ENCODE measurements at regions of chr2 and their contacts with region 1.

Region 1: DNA sequence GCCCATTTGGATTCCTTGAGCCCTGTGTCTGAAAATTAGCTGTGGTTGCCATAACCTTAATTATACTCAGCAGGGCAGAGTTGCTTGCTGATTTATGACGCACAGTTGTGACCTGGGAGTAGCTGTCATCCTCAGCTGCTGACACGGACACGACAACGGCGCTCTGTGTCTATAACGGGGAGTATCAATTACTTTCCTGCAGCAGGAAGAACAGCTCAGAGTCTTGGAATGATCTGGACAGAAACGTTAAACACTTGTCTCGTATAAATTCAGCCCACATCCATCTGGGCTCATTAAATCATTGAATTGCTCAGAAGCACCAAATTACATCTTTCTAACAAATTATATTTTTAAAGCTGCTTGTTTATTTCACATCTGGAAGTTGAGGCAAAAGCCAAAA is 116.3 kb downstream of the SEPTIN10 start:
- DNase-seq: no peak
- H3K4me3 Mint-ChIP-seq: no peak overlapping the region
- H3K27ac Mint-ChIP-seq: no peak overlapping the region
- H3K4me1 Mint-ChIP-seq: no peaks in the 10 kb centered on the region
- H3K27me3 Mint-ChIP-seq: no peaks in the 10 kb centered on the region

Region 2: GRCh38 chr2:109128048-109128465 is 369.4 kb before region 1 on chr2:
- intact Hi-C with region 1: no loop called
- DNase-seq: peak; percentile 40
- H3K4me3 Mint-ChIP-seq: peak overlapping the region; percentile 68
- H3K27ac Mint-ChIP-seq: no peak overlapping the region
- H3K4me1 Mint-ChIP-seq: peaks cover 19% of the 10 kb centered on the region
- H3K27me3 Mint-ChIP-seq: peaks cover 62% of the 10 kb centered on the region

Region 3: GRCh38 chr2:109396202-109397180 is 101.0 kb before region 1 on chr2:
- intact Hi-C with region 1: loop called (anchors 10 kb)
- DNase-seq: no peak
- H3K4me3 Mint-ChIP-seq: no peak overlapping the region
- H3K27ac Mint-ChIP-seq: no peak overlapping the region
- H3K4me1 Mint-ChIP-seq: peaks cover 10% of the 10 kb centered on the region
- H3K27me3 Mint-ChIP-seq: no peaks in the 10 kb centered on the region

Region 4: DNA sequence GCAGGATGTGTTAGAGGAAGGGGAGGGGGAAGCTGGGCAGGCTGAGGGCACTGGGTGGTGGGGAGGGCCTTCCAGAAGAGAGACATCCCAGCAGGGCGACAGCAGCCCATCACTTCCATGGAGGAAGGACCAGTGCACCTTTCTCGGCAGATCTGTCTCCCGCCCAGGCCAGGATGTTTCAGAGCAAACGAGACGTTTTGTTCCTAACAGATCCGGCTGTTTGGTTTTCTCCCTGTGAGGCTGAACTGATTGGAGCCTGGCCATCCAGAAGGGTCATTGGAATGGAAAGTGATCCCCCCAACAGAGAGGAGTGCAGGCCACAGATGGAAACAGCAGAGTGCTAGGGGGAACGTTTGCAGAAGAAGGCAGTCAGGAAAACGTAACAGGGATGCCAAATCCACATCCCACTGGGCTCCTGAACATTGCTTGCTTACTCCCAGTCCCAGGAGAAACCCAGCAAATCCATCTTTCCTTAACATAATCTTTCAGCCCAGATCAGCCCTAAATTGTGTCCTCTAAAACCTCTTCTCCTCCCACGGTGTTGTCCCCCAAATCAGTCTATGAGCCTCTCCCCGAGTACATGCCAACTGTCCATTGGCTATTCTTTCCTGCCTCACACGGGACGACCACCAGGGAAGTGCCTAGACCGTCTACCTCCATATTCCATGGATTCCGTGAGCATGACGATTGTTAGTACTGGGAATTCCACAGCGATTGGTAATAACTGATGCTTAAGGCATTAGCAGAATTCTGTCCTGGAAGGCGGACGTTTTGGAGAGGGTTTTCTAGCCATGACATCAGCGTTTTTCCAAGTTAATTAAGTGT is 10.5 kb before region 1 on chr2:
- intact Hi-C with region 1: no loop called
- DNase-seq: no peak
- H3K4me3 Mint-ChIP-seq: no peak overlapping the region
- H3K27ac Mint-ChIP-seq: no peak overlapping the region
- H3K4me1 Mint-ChIP-seq: no peaks in the 10 kb centered on the region
- H3K27me3 Mint-ChIP-seq: no peaks in the 10 kb centered on the region